ENCODE measurements at regions of chr9 and their contacts with region 1.

Region 1: DNA sequence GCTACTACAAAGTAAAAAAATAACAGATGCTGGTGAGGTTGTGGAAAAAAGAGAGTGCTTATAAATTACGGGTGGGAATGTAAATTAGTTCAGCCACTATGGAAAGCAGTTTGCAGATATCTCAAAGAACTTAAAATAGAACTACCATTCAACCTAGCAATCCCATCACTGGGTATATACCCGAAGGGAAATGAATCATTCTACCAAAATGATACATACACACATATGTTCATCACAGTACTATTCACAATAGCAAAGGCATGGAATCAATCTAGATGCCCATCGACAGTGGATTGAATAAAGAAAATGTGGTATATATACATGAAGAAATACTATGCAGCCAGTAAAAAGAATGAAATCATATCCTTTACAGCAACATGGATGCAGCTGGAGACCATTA is 6.3 kb upstream of the TEX10 start:
- DNase-seq: no peak
- H3K4me3 ChIP-seq: no peak overlapping the region
- H3K27ac ChIP-seq: no peak overlapping the region
- H3K4me1 ChIP-seq: no peaks in the 10 kb centered on the region
- H3K27me3 ChIP-seq: no peaks in the 10 kb centered on the region
- CTCF ChIP-seq: no peak
- POLR2A ChIP-seq: no peak

Region 2: GRCh38 chr9:100377015-100377414 is 18.0 kb after region 1 on chr9:
- CTCF ChIA-PET with region 1: no interaction called
- POLR2A ChIA-PET with region 1: no interaction called
- dilution Hi-C with region 1: no loop called
- intact Hi-C with region 1: no loop called
- DNase-seq: no peak
- H3K4me3 ChIP-seq: no peak overlapping the region
- H3K27ac ChIP-seq: no peak overlapping the region
- H3K4me1 ChIP-seq: no peaks in the 10 kb centered on the region
- H3K27me3 ChIP-seq: no peaks in the 10 kb centered on the region
- CTCF ChIP-seq: no peak
- POLR2A ChIP-seq: no peak

Region 3: DNA sequence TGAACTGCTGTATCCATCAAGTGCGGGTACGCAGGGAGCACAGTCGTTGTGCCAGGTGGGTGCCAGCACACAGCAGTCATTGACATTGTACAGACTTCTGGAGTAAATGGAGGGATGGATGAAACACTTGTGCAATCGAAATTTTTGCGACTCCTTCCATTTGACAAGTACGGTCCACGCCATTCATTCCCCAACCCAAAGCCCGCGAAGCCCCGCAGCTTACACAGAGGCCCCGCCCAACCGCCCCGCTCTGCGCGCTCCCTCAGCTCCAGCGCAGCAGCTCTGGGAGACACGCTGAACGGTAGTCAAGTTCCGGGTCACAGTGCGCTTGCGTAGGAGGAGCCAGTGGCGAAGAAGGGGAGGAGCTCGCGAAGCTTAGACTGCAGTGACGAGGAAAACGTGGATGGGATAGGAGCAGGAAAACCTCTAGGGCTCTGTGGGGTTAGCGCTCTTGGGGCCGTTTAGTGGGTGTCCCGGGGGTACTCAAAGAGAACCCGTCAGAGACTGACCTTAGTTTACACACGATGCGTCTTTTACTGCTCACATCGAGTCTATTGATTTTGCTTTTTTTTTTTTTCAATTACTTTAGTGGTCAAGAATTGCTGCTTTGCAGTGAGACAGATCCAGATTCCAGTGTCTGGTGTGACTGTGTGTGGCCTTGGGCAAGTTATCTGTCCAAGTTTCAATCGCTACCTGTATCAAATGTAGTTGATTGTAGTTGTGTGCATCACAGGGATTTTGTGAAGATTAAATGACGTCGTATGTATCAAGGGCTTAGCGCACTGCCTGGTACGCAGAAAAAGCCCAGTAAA is 52.6 kb after region 1 on chr9:
- CTCF ChIA-PET with region 1: no interaction called
- POLR2A ChIA-PET with region 1: no interaction called
- dilution Hi-C with region 1: no loop called
- intact Hi-C with region 1: loop called (anchors 1 kb)
- DNase-seq: peak; percentile 90
- H3K4me3 ChIP-seq: peak overlapping the region in 2 of 3 experiments; percentile 25 to 57
- H3K27ac ChIP-seq: no peak overlapping the region
- H3K4me1 ChIP-seq: peaks cover 9% of the 10 kb centered on the region
- H3K27me3 ChIP-seq: peaks cover 3 to 8% of the 10 kb centered on the region in 2 experiments
- CTCF ChIP-seq: no peak
- POLR2A ChIP-seq: peak; percentile 75

Measured in endothelial cell of umbilical vein (primary cell).